K562 (cell line): ENCODE measurements at regions of chr7 and their contacts with region 1.

Region 1: GRCh38 chr7:142782922-142783900 is 12.4 kb downstream of the PRSS2 start:
- DNase-seq: peak; percentile 91 to 96 (median 94)
- ATAC-seq: peak; percentile 98
- H3K4me3 ChIP-seq: no peak overlapping the region
- H3K27ac ChIP-seq: no peak overlapping the region
- H3K4me1 ChIP-seq: peaks cover under 1 to 2% of the 10 kb centered on the region in 2 experiments; a peak in 2 of 5 replicates
- H3K27me3 ChIP-seq: peaks cover 6 to 37% of the 10 kb centered on the region in 2 experiments; a peak in 4 of 5 replicates
- CTCF ChIP-seq: peak; percentile 99 to 100 (median 100)
- EP300 ChIP-seq: no peak
- POLR2A ChIP-seq: no peak
- RAD21 ChIP-seq: peak; percentile 99 to 100

Region 2: DNA sequence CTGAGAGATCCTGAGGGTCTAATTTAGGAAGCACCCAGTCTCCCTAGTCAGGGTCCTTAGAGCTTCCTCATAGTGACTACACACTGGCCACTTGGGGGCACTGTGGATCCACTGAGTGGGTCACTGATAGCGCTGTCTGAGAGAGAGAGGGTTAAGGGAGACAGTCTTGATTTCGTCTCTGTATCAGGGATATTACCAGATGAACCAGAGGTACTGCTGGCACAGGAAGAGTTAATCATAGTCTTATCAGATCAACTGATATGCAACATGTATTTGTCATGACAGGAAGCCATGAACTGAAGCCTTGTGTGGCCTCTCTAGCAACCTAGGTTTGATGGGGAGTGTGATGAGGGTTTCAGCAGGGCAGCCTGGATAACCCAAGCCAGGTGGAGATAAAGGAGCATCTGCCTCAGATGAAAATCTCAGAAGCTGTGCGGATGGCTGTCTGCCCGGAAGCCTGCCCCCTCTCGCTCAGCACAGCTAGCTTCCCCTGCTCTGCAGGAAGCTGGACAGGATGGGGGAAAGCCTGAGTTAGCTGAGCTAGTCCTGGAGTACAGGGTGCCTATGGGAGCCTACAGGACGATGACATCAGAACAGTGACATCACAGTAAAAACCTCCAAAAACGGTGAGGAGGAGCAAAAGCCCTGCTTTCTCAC is 248.0 kb before region 1 on chr7:
- CTCF ChIA-PET with region 1: interaction called, 17 read pairs
- POLR2A ChIA-PET with region 1: interaction called, 3 read pairs
- in situ Hi-C with region 1: no loop called
- intact Hi-C with region 1: loop called (anchors 1 kb)
- DNase-seq: peak; percentile 61 to 82 (median 70)
- ATAC-seq: peak; percentile 100
- H3K4me3 ChIP-seq: no peak overlapping the region
- H3K27ac ChIP-seq: no peak overlapping the region
- H3K4me1 ChIP-seq: no peaks in the 10 kb centered on the region
- H3K27me3 ChIP-seq: peaks cover 0 to 3% of the 10 kb centered on the region in 2 experiments; a peak in 3 of 5 replicates
- CTCF ChIP-seq: peak; percentile 91 to 96 (median 92)
- EP300 ChIP-seq: no peak
- POLR2A ChIP-seq: no peak
- RAD21 ChIP-seq: peak; percentile 74 to 76

Region 3: GRCh38 chr7:142626420-142627035 is 156.7 kb before region 1 on chr7:
- CTCF ChIA-PET with region 1: interaction called, 54 read pairs
- POLR2A ChIA-PET with region 1: interaction called, 3 read pairs
- in situ Hi-C with region 1: loop called (anchors 25 kb)
- intact Hi-C with region 1: loop called (anchors 1 kb)
- DNase-seq: peak; percentile 60 to 80 (median 66)
- ATAC-seq: peak; percentile 99
- H3K4me3 ChIP-seq: no peak overlapping the region
- H3K27ac ChIP-seq: no peak overlapping the region
- H3K4me1 ChIP-seq: no peaks in the 10 kb centered on the region
- H3K27me3 ChIP-seq: peaks cover 0 to 8% of the 10 kb centered on the region in 2 experiments; a peak in 3 of 5 replicates
- CTCF ChIP-seq: peak; percentile 78 to 82 (median 81)
- EP300 ChIP-seq: no peak
- POLR2A ChIP-seq: no peak
- RAD21 ChIP-seq: peak; percentile 43 to 55

Region 4: GRCh38 chr7:142669074-142669654 is 114.0 kb before region 1 on chr7:
- CTCF ChIA-PET with region 1: interaction called, 5 read pairs
- POLR2A ChIA-PET with region 1: no interaction called
- in situ Hi-C with region 1: no loop called
- intact Hi-C with region 1: loop called (anchors 1 kb)
- DNase-seq: peak; percentile 17 to 32 (median 22)
- ATAC-seq: peak; percentile 41; the same call in 1 of the 3 replicates
- H3K4me3 ChIP-seq: no peak overlapping the region
- H3K27ac ChIP-seq: no peak overlapping the region
- H3K4me1 ChIP-seq: no peaks in the 10 kb centered on the region
- H3K27me3 ChIP-seq: no peaks in the 10 kb centered on the region; a peak in 1 of 5 replicates
- CTCF ChIP-seq: peak; percentile 34 to 60 (median 54); a peak in 4 of 6 replicates
- EP300 ChIP-seq: no peak
- POLR2A ChIP-seq: no peak
- RAD21 ChIP-seq: peak; percentile 61 to 69

Region 5: DNA sequence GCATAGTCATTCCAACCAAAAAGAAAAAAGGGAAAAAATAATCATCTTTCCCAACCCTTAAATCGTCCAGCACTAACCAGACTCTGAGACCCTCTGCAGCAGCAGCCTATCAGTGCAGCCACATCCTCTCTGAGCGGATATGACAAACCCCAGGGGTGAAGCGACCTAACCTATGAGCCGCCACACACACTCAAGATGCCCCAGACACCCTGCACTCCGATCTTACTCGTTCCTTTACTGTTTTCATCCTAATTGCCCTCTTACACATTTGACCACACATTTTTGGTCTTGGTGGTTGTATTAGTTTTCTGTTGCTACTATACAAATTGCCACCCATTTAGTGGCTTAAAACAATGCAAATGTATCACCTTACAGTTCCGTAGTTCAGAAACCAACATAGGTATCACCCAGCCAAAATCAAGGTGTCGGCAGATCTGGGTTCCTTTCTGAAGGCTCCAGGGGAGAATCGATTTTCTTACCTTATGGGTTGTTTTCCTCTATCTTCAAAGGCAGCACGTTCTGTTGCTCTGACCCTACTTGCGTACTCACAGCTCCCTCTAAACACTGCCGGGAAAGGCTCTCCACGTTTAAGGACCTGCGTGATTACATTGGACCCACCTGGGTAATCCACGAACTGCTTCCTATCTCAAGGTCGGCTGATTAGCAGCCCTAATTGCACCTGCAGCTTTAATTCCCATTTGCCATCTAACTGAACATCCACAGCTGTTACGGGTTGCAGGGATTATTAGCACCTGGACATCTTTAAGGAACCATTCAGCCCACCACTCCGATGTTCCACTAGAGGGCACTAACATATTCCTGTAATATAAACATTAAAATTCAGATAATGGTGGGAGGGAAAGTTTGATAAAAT is 71.2 kb before region 1 on chr7:
- CTCF ChIA-PET with region 1: interaction called, 8 read pairs
- POLR2A ChIA-PET with region 1: no interaction called
- in situ Hi-C with region 1: no loop called
- intact Hi-C with region 1: loop called (anchors 1 kb)
- DNase-seq: peak; percentile 35 to 51 (median 43)
- ATAC-seq: peak; percentile 79
- H3K4me3 ChIP-seq: no peak overlapping the region
- H3K27ac ChIP-seq: no peak overlapping the region
- H3K4me1 ChIP-seq: peaks cover 0 to 6% of the 10 kb centered on the region in 2 experiments; a peak in 2 of 5 replicates
- H3K27me3 ChIP-seq: no peaks in the 10 kb centered on the region
- CTCF ChIP-seq: peak; percentile 67 to 76 (median 67)
- EP300 ChIP-seq: no peak
- POLR2A ChIP-seq: no peak
- RAD21 ChIP-seq: peak; percentile 35 to 51